Activated CD4-positive, alpha-beta memory T cell treated with anti-CD3 and anti-CD28 coated beads for 36 hours (primary cell): ENCODE measurements at regions of chr11 and their contacts with region 1.

Region 1: GRCh38 chr11:122781378-122782195 is 56.7 kb upstream of the CRTAM start:
- DNase-seq: peak; percentile 84
- H3K4me3 Mint-ChIP-seq: no peak overlapping the region
- H3K27ac Mint-ChIP-seq: no peak overlapping the region
- H3K4me1 Mint-ChIP-seq: peaks cover 23% of the 10 kb centered on the region
- H3K27me3 Mint-ChIP-seq: no peaks in the 10 kb centered on the region

Region 2: DNA sequence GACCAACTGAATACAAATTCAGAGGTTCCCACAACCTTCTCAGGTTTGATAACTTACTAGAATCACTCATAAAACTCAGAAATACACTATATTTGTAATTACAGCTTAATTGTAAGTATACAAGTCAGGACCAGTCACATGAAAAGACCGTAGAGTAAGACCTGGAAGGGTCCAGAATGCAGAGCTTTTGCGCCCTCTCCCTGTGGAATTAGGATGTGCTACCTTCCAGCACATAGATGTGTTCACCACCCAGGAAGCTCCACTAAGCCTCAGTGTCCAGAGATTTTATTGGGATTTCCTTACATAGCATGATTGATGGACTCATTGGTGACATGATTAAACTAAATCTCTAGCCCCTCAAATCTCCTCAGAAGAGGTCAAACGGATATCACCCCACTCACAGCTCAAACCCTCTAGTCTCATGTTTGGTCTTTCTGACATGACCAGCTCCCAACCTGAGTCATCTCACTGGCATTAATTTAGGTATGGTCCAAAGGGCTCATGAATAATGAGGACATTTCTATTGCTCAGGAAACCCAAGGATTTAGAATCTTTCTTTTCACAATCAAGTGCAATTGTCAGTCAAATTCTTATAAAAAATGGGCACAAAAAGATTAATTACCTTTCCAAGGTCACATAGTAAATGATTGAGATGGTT is 203.3 kb before region 1 on chr11:
- CTCF ChIA-PET with region 1: interaction called, 79 read pairs
- POLR2A ChIA-PET with region 1: no interaction called
- intact Hi-C with region 1: loop called (anchors 1 kb)
- DNase-seq: no peak
- H3K4me3 Mint-ChIP-seq: no peak overlapping the region
- H3K27ac Mint-ChIP-seq: no peak overlapping the region
- H3K4me1 Mint-ChIP-seq: peaks cover 8% of the 10 kb centered on the region
- H3K27me3 Mint-ChIP-seq: peaks cover 2% of the 10 kb centered on the region

Region 3: GRCh38 chr11:122628810-122629555 is 152.6 kb before region 1 on chr11:
- CTCF ChIA-PET with region 1: interaction called, 119 read pairs
- POLR2A ChIA-PET with region 1: no interaction called
- intact Hi-C with region 1: loop called (anchors 1 kb)
- DNase-seq: peak; percentile 79
- H3K4me3 Mint-ChIP-seq: no peak overlapping the region
- H3K27ac Mint-ChIP-seq: no peak overlapping the region
- H3K4me1 Mint-ChIP-seq: peaks cover 6% of the 10 kb centered on the region
- H3K27me3 Mint-ChIP-seq: peaks cover 1% of the 10 kb centered on the region

Region 4: DNA sequence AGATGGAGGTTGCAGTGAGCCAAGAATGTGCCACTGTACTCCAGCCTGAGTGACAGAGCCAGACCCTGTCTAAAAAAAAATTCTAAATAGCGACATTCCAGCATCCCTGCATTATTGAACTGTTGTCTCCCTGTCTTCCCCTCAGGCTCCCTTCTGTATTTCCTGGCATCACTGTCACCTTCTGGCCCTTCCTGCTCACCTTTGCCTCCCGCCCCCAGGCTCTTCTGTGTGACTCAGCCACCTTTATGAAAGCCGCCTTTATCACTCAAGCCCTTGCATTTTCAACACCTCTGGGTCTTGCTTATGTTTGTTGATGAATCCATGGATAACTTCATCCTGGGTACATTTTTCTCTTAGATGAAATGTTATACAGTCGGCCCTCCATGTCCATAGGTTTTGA is 104.9 kb before region 1 on chr11:
- CTCF ChIA-PET with region 1: interaction called, 12 read pairs
- POLR2A ChIA-PET with region 1: no interaction called
- intact Hi-C with region 1: no loop called
- DNase-seq: peak; percentile 61
- H3K4me3 Mint-ChIP-seq: no peak overlapping the region
- H3K27ac Mint-ChIP-seq: no peak overlapping the region
- H3K4me1 Mint-ChIP-seq: peaks cover 48% of the 10 kb centered on the region
- H3K27me3 Mint-ChIP-seq: no peaks in the 10 kb centered on the region

Region 5: DNA sequence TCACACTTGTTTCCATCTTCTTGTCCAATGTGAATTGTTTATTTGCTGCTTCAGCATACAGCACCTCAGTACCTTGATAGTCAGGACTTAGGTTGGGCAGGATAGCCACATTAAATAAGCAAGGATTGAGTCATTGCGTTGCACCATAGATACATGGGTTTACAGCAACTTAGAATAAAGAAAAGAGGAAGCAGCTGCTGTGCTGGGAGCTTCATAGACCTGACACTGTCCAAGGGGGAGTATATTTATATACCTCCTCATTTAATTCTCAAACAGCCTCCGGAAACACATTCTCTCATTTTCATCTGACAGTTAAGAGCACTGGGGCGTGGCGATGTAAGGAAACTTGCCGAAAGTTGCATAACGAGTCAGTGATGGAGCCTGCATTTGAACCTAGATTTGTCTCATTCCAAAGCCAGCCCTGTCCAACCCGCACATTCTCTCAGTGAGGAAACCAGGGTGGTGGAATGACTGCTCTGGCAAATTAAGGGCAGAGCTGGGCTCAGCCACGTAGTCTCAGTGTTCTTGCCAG is 83.9 kb before region 1 on chr11:
- CTCF ChIA-PET with region 1: interaction called, 11 read pairs
- POLR2A ChIA-PET with region 1: no interaction called
- intact Hi-C with region 1: no loop called
- DNase-seq: peak; percentile 65
- H3K4me3 Mint-ChIP-seq: peak overlapping the region; percentile 57
- H3K27ac Mint-ChIP-seq: peak overlapping the region; percentile 75
- H3K4me1 Mint-ChIP-seq: peaks cover 80% of the 10 kb centered on the region
- H3K27me3 Mint-ChIP-seq: no peaks in the 10 kb centered on the region

Region 6: GRCh38 chr11:122743949-122744348 is 37.6 kb before region 1 on chr11:
- CTCF ChIA-PET with region 1: interaction called, 6 read pairs
- POLR2A ChIA-PET with region 1: interaction called, 3 read pairs
- intact Hi-C with region 1: loop called (anchors 1 kb)
- DNase-seq: peak; percentile 91
- H3K4me3 Mint-ChIP-seq: no peak overlapping the region
- H3K27ac Mint-ChIP-seq: no peak overlapping the region
- H3K4me1 Mint-ChIP-seq: peaks cover 14% of the 10 kb centered on the region
- H3K27me3 Mint-ChIP-seq: no peaks in the 10 kb centered on the region

Region 7: GRCh38 chr11:122796128-122796717 is 14.6 kb after region 1 on chr11:
- CTCF ChIA-PET with region 1: interaction called, 15 read pairs
- POLR2A ChIA-PET with region 1: no interaction called
- intact Hi-C with region 1: no loop called
- DNase-seq: peak; percentile 76
- H3K4me3 Mint-ChIP-seq: no peak overlapping the region
- H3K27ac Mint-ChIP-seq: no peak overlapping the region
- H3K4me1 Mint-ChIP-seq: no peaks in the 10 kb centered on the region
- H3K27me3 Mint-ChIP-seq: no peaks in the 10 kb centered on the region